ENCODE measurements at regions of chr3 and their contacts with region 1.

Region 1: GRCh38 chr3:189981668-189982067 is 139.0 kb downstream of the P3H2 start:
- DNase-seq: no peak
- H3K4me3 ChIP-seq: no peak overlapping the region
- H3K27ac ChIP-seq: no peak overlapping the region
- H3K4me1 ChIP-seq: peaks cover 0 to 19% (median 4%) of the 10 kb centered on the region in 4 experiments; a peak in 4 of 7 replicates
- H3K27me3 ChIP-seq: no peaks in the 10 kb centered on the region
- CTCF ChIP-seq: no peak
- EP300 ChIP-seq: no peak
- POLR2A ChIP-seq: no peak
- RAD21 ChIP-seq: no peak

Region 2: DNA sequence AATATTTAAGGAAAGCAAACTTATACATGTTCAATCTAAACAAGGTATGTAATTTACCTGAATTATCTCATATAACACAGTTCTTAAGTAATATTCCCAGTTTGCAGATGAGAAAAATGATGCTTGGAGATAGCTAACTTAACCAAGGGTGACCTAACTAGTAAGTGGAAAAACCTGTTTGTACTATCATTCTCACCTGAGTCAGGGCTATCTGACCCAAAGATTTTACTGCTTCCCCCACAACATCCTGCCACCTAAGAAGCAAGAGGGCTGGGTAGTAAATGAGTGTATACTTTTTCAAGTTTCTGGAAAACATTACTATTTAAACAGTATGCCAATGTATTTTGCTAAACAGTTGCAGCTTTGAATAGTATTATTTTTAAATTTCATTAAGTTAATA is 339.9 kb before region 1 on chr3:
- CTCF ChIA-PET with region 1: no interaction called
- POLR2A ChIA-PET with region 1: no interaction called
- DNase-seq: no peak
- H3K4me3 ChIP-seq: no peak overlapping the region
- H3K27ac ChIP-seq: no peak overlapping the region
- H3K4me1 ChIP-seq: no peaks in the 10 kb centered on the region
- H3K27me3 ChIP-seq: no peaks in the 10 kb centered on the region
- CTCF ChIP-seq: no peak
- EP300 ChIP-seq: no peak
- POLR2A ChIP-seq: no peak
- RAD21 ChIP-seq: no peak

Region 3: GRCh38 chr3:189967254-189967865 is 14.3 kb before region 1 on chr3:
- CTCF ChIA-PET with region 1: interaction called, 16 read pairs
- POLR2A ChIA-PET with region 1: no interaction called
- DNase-seq: no peak
- H3K4me3 ChIP-seq: no peak overlapping the region
- H3K27ac ChIP-seq: no peak overlapping the region
- H3K4me1 ChIP-seq: peaks cover 0 to under 1% (median 0%) of the 10 kb centered on the region in 4 experiments; a peak in 3 of 7 replicates
- H3K27me3 ChIP-seq: no peaks in the 10 kb centered on the region
- CTCF ChIP-seq: peak in 2 of 3 experiments; percentile 62 to 73; a peak in 2 of 4 replicates
- EP300 ChIP-seq: no peak
- POLR2A ChIP-seq: no peak
- RAD21 ChIP-seq: peak; percentile 89 to 92

Measured in H1 (cell line).